IMR-90 (cell line): ENCODE measurements at regions of chr11 and their contacts with region 1.

Region 1: DNA sequence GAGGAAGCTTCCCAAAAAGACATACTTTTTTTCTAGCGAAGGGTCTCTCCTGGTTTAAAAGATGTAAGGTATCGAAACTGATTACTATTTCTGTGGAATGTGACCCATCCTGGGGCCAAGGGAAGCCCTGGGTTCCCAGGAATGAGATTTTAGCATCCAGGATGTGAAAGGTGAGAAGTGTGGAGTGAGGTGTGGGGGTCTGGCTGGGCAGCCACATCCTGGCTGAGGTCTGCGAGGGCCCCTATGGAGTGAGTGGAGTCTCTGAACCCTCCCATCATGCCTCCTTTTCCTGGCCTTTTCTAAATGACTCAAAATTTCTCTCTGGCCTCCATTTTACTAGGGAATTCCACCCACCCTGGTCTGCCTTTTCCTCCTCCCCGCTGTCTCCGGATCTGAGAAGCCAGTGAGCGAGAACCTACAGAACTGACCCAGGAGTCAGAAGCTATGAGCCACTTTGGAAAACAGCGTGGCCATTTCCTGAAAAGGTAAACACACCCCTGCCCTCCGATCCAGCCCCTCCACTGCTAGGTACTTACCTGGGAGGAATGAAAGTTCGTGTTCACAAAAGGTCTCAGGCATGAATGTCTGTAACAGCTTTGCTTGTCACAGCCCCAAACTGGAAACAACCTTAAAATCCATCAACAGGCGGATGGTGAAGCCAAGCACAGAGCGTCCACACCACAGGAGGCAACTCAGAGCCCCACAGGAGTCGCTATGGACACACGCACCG is 27.7 kb upstream of the SHANK2 start:
- DNase-seq: no peak
- ATAC-seq: no peak
- H3K4me3 ChIP-seq: no peak overlapping the region
- H3K27ac ChIP-seq: no peak overlapping the region
- H3K4me1 ChIP-seq: no peaks in the 10 kb centered on the region
- H3K27me3 ChIP-seq: peaks cover 13% of the 10 kb centered on the region
- CTCF ChIP-seq: no peak
- POLR2A ChIP-seq: no peak
- RAD21 ChIP-seq: no peak

Region 2: GRCh38 chr11:70933981-70934583 is 346.0 kb before region 1 on chr11:
- CTCF ChIA-PET with region 1: no interaction called
- POLR2A ChIA-PET with region 1: interaction called, 12 read pairs
- dilution Hi-C with region 1: no loop called
- in situ Hi-C with region 1: no loop called
- intact Hi-C with region 1: no loop called
- DNase-seq: no peak
- ATAC-seq: no peak
- H3K4me3 ChIP-seq: no peak overlapping the region
- H3K27ac ChIP-seq: no peak overlapping the region
- H3K4me1 ChIP-seq: peaks cover 2% of the 10 kb centered on the region; the same call in 1 of the 2 replicates
- H3K27me3 ChIP-seq: no peaks in the 10 kb centered on the region
- CTCF ChIP-seq: no peak
- POLR2A ChIP-seq: no peak
- RAD21 ChIP-seq: no peak

Region 3: DNA sequence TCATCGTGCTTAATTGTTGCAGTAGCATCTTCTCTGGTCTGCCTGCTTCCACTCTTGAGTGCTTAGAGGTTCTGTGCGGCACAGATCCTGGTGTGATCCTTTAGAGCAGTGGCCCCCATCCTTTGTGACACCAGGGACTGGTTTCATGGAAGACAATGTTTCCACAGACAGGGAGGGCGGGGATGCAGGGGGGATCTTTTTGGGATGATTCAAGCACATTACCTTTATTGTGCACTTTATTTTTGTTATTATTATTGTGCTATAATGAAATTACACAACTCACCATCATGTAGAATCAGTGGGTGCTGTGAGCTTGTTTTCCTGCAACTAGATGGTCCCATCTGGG is 49.1 kb after region 1 on chr11:
- CTCF ChIA-PET with region 1: no interaction called
- POLR2A ChIA-PET with region 1: no interaction called
- dilution Hi-C with region 1: no loop called
- in situ Hi-C with region 1: no loop called
- intact Hi-C with region 1: no loop called
- DNase-seq: no peak
- ATAC-seq: no peak
- H3K4me3 ChIP-seq: no peak overlapping the region
- H3K27ac ChIP-seq: no peak overlapping the region
- H3K4me1 ChIP-seq: no peaks in the 10 kb centered on the region
- H3K27me3 ChIP-seq: peaks cover 12% of the 10 kb centered on the region
- CTCF ChIP-seq: no peak
- POLR2A ChIP-seq: no peak
- RAD21 ChIP-seq: no peak